AG04450 (cell line): ENCODE measurements at regions of chr1 and their contacts with region 1.

Region 1: GRCh38 chr1:109099938-109100773 is 9.6 kb downstream of the TMEM167B start:
- DNase-seq: peak; percentile 94
- H3K4me3 ChIP-seq: peak overlapping the region; percentile 97
- H3K27ac ChIP-seq: peak overlapping the region; percentile 75
- H3K27me3 ChIP-seq: no peaks in the 10 kb centered on the region
- CTCF ChIP-seq: peak; percentile 84

Region 2: DNA sequence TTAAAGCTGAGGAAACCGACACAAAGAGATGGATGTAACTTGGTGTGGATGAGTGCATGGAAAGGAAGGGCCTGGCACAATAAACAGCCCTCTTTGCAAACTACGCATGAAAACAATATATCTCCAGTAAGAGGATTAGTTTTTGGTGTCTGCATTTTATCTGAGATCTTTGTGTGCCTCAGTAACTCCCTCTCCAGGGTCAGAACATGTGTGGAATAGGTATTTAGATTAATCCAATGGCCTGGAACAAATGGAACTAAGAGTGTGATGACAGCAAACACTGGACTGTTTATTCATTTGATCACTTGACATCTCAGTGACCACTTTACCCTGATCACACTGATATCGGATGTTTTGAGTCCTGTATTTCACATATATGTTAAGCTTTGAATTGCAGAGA is 288.5 kb before region 1 on chr1:
- CTCF ChIA-PET with region 1: no interaction called
- POLR2A ChIA-PET with region 1: no interaction called
- DNase-seq: no peak
- H3K4me3 ChIP-seq: no peak overlapping the region
- H3K27ac ChIP-seq: no peak overlapping the region
- H3K27me3 ChIP-seq: no peaks in the 10 kb centered on the region
- CTCF ChIP-seq: no peak

Region 3: GRCh38 chr1:108871050-108871724 is 229.0 kb before region 1 on chr1:
- CTCF ChIA-PET with region 1: no interaction called
- POLR2A ChIA-PET with region 1: no interaction called
- DNase-seq: no peak
- H3K4me3 ChIP-seq: no peak overlapping the region
- H3K27ac ChIP-seq: no peak overlapping the region
- H3K27me3 ChIP-seq: peaks cover 4% of the 10 kb centered on the region
- CTCF ChIP-seq: no peak

Region 4: GRCh38 chr1:109011335-109011734 is 88.8 kb before region 1 on chr1:
- CTCF ChIA-PET with region 1: interaction called, 12 read pairs
- POLR2A ChIA-PET with region 1: no interaction called
- DNase-seq: no peak
- H3K4me3 ChIP-seq: no peak overlapping the region
- H3K27ac ChIP-seq: no peak overlapping the region
- H3K27me3 ChIP-seq: no peaks in the 10 kb centered on the region
- CTCF ChIP-seq: no peak

Region 5: DNA sequence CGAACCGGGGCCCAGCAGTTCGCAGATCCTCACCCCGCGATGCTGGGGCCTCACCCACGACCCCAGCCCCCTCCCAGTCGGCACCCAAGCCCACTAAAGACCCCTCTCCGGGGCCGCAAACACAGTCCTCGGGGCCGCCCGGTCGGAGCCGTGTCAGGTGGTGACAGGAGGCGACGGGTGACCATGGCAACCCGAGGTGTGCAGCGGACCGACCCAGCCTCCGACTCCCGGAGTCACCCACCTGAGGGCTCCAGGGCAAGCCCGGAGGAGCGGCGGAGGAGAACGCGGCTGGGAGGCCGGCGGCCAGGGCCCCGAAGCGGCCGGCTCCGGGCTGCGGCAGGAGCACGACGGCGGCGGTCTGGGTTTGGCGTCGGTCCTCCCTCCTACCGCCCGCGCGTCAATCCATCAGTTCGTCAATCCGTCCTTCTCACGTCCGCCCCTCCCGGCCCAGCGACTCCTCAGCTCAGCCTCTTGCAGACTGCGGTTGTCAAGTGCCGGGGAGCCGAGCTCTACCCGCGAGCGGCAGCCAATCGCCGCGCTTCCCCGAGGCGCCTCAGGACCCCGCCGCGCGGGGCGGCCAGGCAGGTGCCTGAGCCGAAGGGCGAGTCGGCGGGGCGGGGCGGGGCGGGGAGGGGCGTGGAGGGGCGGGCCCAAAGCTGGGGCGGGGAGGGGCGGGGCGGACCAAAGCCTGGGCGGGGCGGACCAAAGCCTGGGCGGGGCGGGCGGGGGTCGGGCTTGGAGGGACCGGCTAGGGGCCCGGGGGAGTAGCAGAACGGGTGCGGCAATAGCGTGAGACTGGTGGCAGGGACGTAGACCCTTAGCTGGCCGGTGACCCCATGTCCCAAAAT is 58.3 kb before region 1 on chr1 and contains the start of gene WDR47:
- CTCF ChIA-PET with region 1: interaction called, 3 read pairs
- POLR2A ChIA-PET with region 1: interaction called, 19 read pairs
- DNase-seq: peak; percentile 84
- H3K4me3 ChIP-seq: peak within 1 kb of the TSS; percentile 90
- H3K27ac ChIP-seq: peak within 1 kb of the TSS; percentile 65
- H3K27me3 ChIP-seq: no peaks in the 10 kb centered on the region
- CTCF ChIP-seq: no peak
- polyA plus RNA-seq, gene WDR47: 14.6 and 23.1 TPM in 2 replicates

Region 6: DNA sequence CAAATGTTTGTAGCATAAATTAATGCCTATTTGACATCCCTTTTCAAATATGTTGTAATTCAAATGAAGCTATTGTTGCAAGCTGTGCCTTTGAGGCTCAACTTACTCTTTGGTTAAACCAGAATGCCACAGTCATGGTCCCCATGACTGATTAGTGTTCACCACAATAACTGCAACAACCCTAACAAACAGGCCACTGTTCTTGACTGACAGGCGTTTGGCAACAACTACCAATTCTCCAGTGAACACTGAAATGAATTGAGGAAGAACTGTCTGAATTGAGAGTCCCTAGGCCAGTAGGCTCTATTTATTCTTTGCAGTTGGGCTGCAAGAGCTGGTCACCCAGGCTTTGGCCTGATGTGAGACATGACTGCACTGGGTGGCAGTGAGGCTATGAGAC is 16.2 kb before region 1 on chr1:
- CTCF ChIA-PET with region 1: interaction called, 21 read pairs
- POLR2A ChIA-PET with region 1: interaction called, 8 read pairs
- DNase-seq: no peak
- H3K4me3 ChIP-seq: no peak overlapping the region
- H3K27ac ChIP-seq: no peak overlapping the region
- H3K27me3 ChIP-seq: no peaks in the 10 kb centered on the region
- CTCF ChIP-seq: no peak

Region 7: DNA sequence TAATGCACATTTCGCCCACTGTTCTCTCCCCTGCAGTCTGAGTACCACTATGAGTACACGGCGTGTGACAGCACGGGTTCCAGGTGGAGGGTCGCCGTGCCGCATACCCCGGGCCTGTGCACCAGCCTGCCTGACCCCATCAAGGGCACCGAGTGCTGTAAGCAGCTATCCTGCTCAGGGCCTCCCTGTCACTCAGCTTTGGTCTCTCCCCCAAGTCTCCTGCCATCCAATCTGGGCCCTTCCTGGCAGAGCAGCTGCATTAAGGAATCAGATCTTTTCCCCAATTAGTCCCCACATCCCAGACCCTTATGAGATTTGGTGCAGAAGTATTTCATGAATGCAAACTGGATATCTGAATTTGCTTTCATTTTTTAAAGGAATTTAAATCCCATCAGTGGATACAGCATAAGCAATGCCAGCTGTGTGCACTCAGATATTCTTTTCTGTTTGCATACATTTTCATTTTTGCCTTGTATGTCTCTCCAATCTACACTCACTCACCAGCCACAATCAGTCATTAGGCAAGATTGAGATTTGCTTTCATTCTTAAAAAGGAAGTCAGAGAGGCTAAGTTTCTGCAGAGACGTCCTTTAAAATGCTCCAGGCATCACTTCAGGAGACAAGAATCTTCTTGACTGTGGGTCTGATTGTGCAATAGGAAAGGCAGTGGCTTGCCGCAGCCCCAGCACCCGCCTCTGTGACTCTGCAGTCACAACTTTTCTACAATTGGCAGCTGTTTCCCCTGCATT is 61.9 kb after region 1 on chr1:
- CTCF ChIA-PET with region 1: interaction called, 3 read pairs
- POLR2A ChIA-PET with region 1: interaction called, 12 read pairs
- DNase-seq: no peak
- H3K4me3 ChIP-seq: peak overlapping the region; percentile 41
- H3K27ac ChIP-seq: peak overlapping the region; percentile 75
- H3K27me3 ChIP-seq: no peaks in the 10 kb centered on the region
- CTCF ChIP-seq: no peak

Region 8: GRCh38 chr1:109327285-109327684 is 227.1 kb after region 1 on chr1:
- CTCF ChIA-PET with region 1: no interaction called
- POLR2A ChIA-PET with region 1: no interaction called
- DNase-seq: no peak
- H3K4me3 ChIP-seq: no peak overlapping the region
- H3K27ac ChIP-seq: no peak overlapping the region
- H3K27me3 ChIP-seq: no peaks in the 10 kb centered on the region
- CTCF ChIP-seq: no peak